Activated T-helper 1 cell treated with anti-CD3 and anti-CD28 coated beads, Interleukin-12 subunit alpha, Interleukin-12 subunit beta, Interleukin-2, Interleukin-4 antibody, amounts not matched to agents 30 ng/mL and 10 ng/mL and 1 ng/mL, durations not matched to agents 14 hours and 24 hours and 36 hours (primary cell): ENCODE measurements at regions of chr10 and their contacts with region 1.

Region 1: GRCh38 chr10:25016376-25017154 is at the start of gene THNSL1:
- DNase-seq: peak; percentile 97
- H3K4me3 Mint-ChIP-seq: peak within 1 kb of the TSS; percentile 89
- H3K27ac Mint-ChIP-seq: peak within 1 kb of the TSS; percentile 95
- H3K4me1 Mint-ChIP-seq: peaks cover 16% of the 10 kb centered on the region
- H3K27me3 Mint-ChIP-seq: peaks cover 2% of the 10 kb centered on the region
- total RNA-seq, gene THNSL1: 3.0 and 3.1 TPM in 2 replicates

Region 2: GRCh38 chr10:24603333-24603732 is 413.2 kb before region 1 on chr10:
- intact Hi-C with region 1: loop called (anchors 2 kb)
- DNase-seq: no peak
- H3K4me3 Mint-ChIP-seq: peak overlapping the region; percentile 45
- H3K27ac Mint-ChIP-seq: peak overlapping the region; percentile 95
- H3K4me1 Mint-ChIP-seq: peaks cover 38% of the 10 kb centered on the region
- H3K27me3 Mint-ChIP-seq: no peaks in the 10 kb centered on the region

Region 3: DNA sequence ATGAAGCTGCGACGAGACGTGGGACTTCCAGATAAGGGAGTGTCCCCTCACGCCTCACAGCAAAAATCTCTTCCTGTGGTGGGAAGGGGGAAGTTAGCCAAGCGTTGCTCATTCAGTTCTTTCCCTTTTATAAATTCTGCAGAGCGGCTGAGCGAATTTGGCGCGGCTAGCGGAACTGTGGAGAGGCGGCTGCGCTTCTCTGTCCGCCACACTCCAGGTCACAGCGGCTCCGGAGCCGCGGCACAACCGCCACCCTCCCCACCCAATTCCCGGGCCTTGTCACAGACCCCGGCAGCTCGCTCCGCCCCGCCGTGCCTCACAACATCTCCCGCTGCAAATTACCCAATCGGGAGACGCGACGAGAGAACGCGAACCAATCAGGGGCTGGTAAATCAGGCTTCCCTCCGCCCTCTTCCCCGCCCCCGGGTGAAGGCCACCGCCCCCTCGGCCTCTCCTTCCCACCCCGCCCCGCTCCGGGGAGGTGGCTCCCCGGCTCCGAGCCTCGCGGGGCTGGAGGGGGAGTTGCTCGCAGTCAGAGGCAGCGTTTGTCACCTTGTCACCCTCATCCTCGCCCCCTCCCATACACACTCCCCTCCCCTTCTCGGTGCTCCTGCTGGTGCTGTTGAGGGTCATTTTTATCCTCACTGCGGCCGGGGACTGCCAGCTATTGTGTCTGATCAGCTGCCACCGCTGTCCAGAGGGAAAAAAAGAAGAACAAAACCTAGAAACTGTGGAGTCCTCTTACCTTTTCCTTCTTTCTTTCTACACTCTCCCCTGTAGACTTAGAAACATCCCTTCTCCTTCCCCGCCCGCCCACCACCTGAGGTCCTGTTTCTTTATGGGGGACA is 292.0 kb before region 1 on chr10:
- intact Hi-C with region 1: loop called (anchors 1 kb)
- DNase-seq: peak; percentile 92
- H3K4me3 Mint-ChIP-seq: peak overlapping the region; percentile 93
- H3K27ac Mint-ChIP-seq: peak overlapping the region; percentile 96
- H3K4me1 Mint-ChIP-seq: peaks cover 29% of the 10 kb centered on the region
- H3K27me3 Mint-ChIP-seq: no peaks in the 10 kb centered on the region

Region 4: DNA sequence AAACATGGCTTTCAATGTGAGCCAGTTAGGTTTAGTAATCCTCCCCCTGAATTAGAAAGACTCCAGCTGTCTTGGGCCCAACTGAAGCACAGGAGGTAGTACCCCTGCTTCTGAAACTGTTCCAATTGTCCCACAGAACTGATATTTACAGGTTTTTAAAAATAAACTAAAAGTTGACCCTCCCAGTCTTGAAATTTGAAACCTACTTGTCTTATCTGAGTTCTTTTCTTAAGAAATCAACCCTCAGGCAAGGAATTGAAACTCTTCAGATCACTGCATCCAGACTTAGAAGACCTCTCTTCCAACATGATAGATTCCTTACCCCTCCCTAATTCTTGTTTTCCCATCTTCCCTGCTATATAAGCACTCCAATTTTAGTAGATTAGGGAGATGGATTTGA is 279.6 kb before region 1 on chr10:
- intact Hi-C with region 1: no loop called
- DNase-seq: no peak
- H3K4me3 Mint-ChIP-seq: no peak overlapping the region
- H3K27ac Mint-ChIP-seq: no peak overlapping the region
- H3K4me1 Mint-ChIP-seq: no peaks in the 10 kb centered on the region
- H3K27me3 Mint-ChIP-seq: no peaks in the 10 kb centered on the region

Region 5: DNA sequence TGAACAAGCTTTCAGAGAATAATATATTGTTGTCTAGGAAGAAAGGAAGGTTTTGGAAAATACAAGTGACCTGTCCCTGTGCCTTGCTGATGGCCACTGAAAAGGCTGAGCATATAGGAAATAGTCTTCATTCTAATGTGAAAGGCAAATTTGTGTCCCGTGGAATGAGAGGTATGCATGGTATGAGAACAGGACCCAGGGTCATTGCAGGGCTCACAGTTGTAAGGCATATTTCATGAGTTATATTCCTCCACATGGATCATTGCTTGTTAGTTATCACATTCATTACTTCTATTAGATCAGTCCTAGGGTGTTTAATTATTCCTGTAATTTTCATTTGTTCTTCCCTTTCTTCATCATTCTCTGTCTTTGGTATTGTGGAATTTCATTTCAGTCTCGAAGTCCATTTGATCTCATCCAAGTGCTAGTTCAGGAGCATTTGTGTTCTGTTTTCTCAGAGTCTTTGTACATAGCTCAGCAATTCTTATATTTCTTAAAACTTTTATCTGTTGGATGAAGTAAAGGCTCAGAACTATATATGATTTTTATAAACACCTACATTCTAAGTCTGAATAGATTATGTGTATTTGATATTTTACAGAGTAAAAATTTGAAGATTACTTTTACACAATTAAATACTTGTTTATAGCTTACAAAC is 253.5 kb before region 1 on chr10:
- intact Hi-C with region 1: no loop called
- DNase-seq: no peak
- H3K4me3 Mint-ChIP-seq: no peak overlapping the region
- H3K27ac Mint-ChIP-seq: no peak overlapping the region
- H3K4me1 Mint-ChIP-seq: peaks cover 6% of the 10 kb centered on the region
- H3K27me3 Mint-ChIP-seq: peaks cover 3% of the 10 kb centered on the region

Region 6: GRCh38 chr10:24804956-24805355 is 211.6 kb before region 1 on chr10:
- intact Hi-C with region 1: no loop called
- DNase-seq: no peak
- H3K4me3 Mint-ChIP-seq: no peak overlapping the region
- H3K27ac Mint-ChIP-seq: no peak overlapping the region
- H3K4me1 Mint-ChIP-seq: no peaks in the 10 kb centered on the region
- H3K27me3 Mint-ChIP-seq: peaks cover 4% of the 10 kb centered on the region

Region 7: DNA sequence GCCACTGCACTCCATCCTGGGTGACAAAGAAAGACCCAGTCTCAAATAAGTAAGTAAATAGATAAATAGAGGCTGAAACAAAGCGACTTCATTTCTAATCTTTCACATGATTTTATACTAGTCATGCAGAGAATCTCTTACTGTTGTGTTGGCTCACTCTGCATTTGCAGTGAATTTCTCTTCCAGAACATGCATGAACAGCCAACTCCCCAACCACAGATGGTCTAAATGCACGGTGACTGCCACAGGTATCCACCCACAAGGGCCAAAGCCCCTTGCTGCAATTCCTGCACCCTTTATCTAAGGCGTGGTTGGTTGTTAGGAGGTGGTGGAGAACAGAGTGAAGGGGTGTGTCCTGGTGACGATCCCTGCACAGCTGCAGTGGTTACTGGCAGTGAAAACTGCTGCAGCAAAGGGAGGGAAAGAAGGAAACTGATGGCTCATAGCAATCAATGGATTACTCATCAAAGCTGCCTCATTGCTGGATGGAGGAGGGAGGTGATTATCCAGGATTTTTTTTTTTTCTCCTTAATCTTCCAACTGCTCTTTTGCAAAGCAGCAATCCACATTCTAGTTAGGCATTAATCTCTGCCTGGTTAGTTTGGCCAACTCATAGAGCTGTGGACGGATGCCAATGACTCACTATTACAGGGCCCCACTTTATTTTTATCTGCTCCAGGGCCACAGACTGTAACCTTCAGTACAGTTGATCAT is 114.7 kb before region 1 on chr10:
- intact Hi-C with region 1: loop called (anchors 1 kb)
- DNase-seq: no peak
- H3K4me3 Mint-ChIP-seq: no peak overlapping the region
- H3K27ac Mint-ChIP-seq: peak overlapping the region; percentile 73
- H3K4me1 Mint-ChIP-seq: peaks cover 33% of the 10 kb centered on the region
- H3K27me3 Mint-ChIP-seq: no peaks in the 10 kb centered on the region

Region 8: DNA sequence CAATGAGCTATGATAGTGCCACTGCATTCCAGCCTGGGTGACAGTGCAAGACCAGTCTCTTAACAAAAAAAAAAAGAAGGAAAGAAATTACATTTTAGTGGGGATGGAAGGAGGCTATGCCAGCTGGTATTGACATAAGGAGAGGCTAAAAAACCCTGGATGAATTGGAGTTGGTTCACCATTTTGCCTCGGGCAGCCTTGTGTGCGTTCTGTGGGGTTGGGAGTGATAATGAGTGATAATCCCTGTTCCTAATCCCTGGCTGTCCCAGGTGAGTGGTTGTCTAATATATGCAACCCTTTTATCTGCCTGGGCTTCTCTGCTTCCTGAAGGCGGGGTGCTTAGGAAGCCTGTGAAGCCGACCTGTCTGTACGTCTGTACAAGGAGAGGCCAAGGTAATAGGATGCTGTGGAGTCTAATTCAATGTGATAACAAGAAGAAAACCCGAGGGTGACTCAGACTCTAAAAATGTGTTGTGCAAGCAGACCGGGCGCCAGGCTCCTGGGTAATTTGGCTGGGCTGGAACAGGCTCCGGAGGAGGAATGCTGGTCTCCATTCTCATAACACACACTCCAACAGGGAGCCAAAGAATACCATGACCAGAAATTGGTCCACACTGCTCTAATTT is 43.3 kb after region 1 on chr10:
- intact Hi-C with region 1: loop called (anchors 1 kb)
- DNase-seq: no peak
- H3K4me3 Mint-ChIP-seq: no peak overlapping the region
- H3K27ac Mint-ChIP-seq: no peak overlapping the region
- H3K4me1 Mint-ChIP-seq: peaks cover 30% of the 10 kb centered on the region
- H3K27me3 Mint-ChIP-seq: no peaks in the 10 kb centered on the region